ENCODE measurements at regions of chr4 and their contacts with region 1.

Region 1: DNA sequence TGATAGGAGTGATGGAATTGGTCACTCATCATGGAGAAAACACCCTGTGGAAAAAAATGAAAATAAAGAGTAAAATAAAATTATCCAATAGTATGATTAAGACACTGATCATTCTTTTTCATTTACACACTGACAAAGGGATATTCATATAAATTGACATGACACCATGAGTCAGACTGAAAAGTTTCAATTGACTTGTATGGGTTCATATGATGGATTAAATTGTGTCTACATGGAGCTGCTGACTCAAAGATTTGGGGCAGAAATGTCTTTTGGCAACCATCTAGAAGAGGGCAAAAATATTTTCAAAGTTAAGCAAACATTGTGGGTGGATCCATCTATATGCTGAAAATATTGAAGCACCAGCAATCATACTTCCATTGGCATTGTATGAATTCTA is 153.4 kb upstream of the PPP3CA start:
- DNase-seq: no peak
- ATAC-seq: no peak
- H3K4me3 ChIP-seq: no peak overlapping the region
- H3K27ac ChIP-seq: no peak overlapping the region
- H3K4me1 ChIP-seq: no peaks in the 10 kb centered on the region
- H3K27me3 ChIP-seq: no peaks in the 10 kb centered on the region
- CTCF ChIP-seq: no peak

Region 2: GRCh38 chr4:101393250-101393649 is 107.5 kb before region 1 on chr4:
- intact Hi-C with region 1: loop called in 1 of 10 experiments (anchors 10 kb)
- DNase-seq: no peak
- ATAC-seq: peak in 1 of 8 donors; percentile 39
- H3K4me3 ChIP-seq: no peak overlapping the region
- H3K27ac ChIP-seq: no peak overlapping the region
- H3K4me1 ChIP-seq: no peaks in the 10 kb centered on the region
- H3K27me3 ChIP-seq: no peaks in the 10 kb centered on the region
- CTCF ChIP-seq: no peak

Region 3: GRCh38 chr4:101475246-101475645 is 25.5 kb before region 1 on chr4:
- intact Hi-C with region 1: no loop called
- DNase-seq: no peak
- ATAC-seq: no peak
- H3K4me3 ChIP-seq: no peak overlapping the region
- H3K27ac ChIP-seq: no peak overlapping the region
- H3K4me1 ChIP-seq: no peaks in the 10 kb centered on the region
- H3K27me3 ChIP-seq: no peaks in the 10 kb centered on the region
- CTCF ChIP-seq: no peak

Region 4: DNA sequence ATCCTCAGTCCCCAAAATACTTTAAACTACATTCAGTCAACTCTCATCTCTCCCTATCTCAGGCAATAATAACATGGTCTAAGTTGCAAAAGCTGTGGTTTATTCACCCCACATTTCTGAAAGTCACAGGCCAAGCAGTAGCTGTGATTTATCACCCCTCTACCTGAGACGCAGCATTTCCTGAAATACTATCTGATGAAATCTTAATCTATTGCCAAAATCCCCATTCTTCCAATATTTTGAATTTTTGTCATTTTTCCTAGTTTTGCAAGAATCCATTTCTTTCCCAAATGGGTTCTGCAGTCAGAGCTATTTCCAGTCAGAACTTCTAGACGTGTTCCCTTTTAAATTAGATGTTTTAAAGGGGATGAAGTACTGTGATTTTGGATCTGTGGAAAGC is 438.1 kb after region 1 on chr4:
- intact Hi-C with region 1: no loop called
- DNase-seq: no peak
- ATAC-seq: no peak
- H3K4me3 ChIP-seq: no peak overlapping the region
- H3K27ac ChIP-seq: no peak overlapping the region
- H3K4me1 ChIP-seq: no peaks in the 10 kb centered on the region
- H3K27me3 ChIP-seq: no peaks in the 10 kb centered on the region
- CTCF ChIP-seq: no peak